PC-9 (cell line): ENCODE measurements at regions of chr1 and their contacts with region 1.

Region 1: GRCh38 chr1:227946624-227947385 is 927 bp downstream of the WNT9A start:
- DNase-seq: peak; percentile 70 to 97
- H3K4me3 ChIP-seq: peak overlapping the region; percentile 64
- H3K27ac ChIP-seq: peak overlapping the region; percentile 62
- H3K4me1 ChIP-seq: peaks cover 23% of the 10 kb centered on the region
- H3K27me3 ChIP-seq: no peaks in the 10 kb centered on the region
- CTCF ChIP-seq: peak; percentile 81

Region 2: GRCh38 chr1:226990133-226990716 is 956.6 kb before region 1 on chr1:
- CTCF ChIA-PET with region 1: no interaction called
- POLR2A ChIA-PET with region 1: no interaction called
- intact Hi-C with region 1: no loop called
- DNase-seq: no peak
- H3K4me3 ChIP-seq: no peak overlapping the region
- H3K27ac ChIP-seq: no peak overlapping the region
- H3K4me1 ChIP-seq: peaks cover 10% of the 10 kb centered on the region; the same call in 1 of the 2 replicates
- H3K27me3 ChIP-seq: no peaks in the 10 kb centered on the region
- CTCF ChIP-seq: no peak

Region 3: DNA sequence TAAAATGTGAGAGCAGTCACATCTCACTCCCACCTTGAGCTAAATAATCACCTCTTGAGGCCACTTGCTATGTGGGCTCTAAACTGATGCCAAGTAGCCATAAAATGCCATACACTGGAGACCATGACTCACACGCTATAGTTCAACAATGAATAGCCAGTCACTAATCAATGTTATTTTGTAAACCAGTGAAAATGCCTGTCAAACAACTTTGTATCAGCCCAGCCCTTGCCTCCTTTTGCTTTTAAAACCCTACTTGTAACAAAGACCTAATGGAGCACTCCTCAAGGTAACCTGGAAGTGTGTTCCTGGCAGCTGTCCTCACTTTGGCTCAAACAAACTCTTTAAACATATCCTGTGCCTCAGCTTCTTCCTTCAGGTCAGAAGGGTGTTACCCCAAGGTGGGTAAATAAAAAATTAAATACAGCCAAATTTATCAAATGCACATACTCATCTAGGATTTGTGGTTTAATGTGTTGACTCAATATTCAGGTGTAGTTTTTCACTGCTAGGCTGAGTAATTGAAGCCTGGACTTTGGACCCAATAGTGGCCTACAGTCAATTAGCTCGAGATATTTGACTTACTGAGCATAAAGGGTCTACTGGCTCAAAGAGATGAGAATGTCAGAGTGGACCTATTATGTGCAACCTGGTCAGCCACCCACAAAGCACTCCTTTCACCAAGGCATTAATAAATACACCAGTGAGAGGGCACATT is 852.4 kb before region 1 on chr1:
- CTCF ChIA-PET with region 1: no interaction called
- POLR2A ChIA-PET with region 1: no interaction called
- intact Hi-C with region 1: no loop called
- DNase-seq: no peak
- H3K4me3 ChIP-seq: no peak overlapping the region
- H3K27ac ChIP-seq: no peak overlapping the region
- H3K4me1 ChIP-seq: no peaks in the 10 kb centered on the region
- H3K27me3 ChIP-seq: no peaks in the 10 kb centered on the region
- CTCF ChIP-seq: no peak

Region 4: DNA sequence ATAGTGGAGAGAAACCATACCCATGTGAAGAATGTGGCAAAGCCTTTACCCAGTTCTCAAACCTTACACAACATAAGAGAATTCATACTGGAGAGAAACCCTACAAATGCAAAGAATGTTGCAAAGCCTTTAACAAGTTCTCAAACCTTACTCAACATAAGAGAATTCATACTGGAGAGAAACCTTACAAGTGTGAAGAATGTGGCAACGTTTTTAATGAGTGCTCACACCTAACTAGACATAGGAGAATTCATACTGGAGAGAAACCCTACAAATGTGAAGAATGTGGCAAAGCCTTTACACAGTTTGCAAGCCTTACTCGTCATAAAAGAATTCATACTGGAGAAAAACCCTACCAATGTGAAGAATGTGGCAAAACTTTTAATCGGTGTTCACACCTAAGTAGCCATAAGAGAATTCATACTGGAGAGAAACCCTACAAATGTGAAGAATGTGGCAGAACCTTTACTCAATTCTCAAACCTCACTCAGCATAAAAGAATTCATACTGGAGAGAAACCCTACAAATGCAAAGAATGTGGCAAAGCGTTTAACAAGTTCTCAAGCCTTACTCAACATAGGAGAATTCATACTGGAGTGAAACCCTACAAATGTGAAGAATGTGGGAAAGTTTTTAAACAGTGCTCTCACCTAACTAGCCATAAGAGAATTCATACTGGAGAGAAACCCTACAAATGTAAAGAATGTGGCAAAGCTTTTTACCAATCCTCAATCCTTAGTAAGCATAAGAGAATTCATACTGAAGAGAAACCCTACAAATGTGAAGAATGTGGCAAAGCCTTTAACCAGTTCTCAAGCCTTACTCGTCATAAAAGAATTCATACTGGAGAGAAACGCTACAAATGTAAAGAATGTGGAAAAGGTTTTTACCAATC is 291.7 kb before region 1 on chr1:
- CTCF ChIA-PET with region 1: no interaction called
- POLR2A ChIA-PET with region 1: no interaction called
- intact Hi-C with region 1: loop called (anchors 1 kb)
- DNase-seq: no peak
- H3K4me3 ChIP-seq: no peak overlapping the region
- H3K27ac ChIP-seq: no peak overlapping the region
- H3K4me1 ChIP-seq: no peaks in the 10 kb centered on the region
- H3K27me3 ChIP-seq: no peaks in the 10 kb centered on the region
- CTCF ChIP-seq: no peak

Region 5: DNA sequence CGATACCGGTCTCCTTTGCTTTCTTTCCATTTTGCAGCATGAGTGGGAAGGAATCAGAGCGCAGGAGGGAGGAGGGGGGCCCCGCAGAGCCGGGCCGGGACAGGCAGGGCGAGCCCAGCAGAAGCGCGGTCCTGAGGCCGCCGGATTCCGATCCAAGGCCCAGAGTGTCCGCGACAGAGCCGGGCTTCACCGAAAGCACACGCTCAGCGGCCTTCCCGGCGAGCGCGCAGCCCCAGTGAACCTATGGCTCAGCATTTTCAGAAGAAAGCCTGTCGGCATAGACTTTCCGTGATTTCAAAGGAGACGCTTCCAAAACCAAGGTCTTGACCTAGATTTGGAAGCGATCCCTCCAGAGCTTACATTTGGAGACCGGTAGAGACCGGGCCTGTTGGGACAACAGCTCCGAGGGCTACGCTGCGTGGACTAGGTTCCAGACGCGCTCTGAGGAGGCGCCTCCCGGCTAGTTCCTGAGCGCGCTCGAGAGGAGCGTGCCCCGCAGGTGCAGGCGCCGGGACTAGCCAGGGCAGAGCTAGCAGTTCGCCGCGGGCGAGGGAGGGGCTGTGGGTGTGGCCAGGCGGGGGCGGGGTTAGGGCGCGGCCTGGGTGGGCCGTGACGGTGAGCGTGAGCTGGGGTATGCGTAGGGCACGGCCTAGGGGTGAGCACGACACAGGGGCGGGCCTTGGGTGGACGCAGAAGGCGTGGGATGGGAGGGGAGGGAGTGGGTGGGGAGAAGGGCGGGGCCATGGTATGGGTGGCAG is 159.1 kb before region 1 on chr1:
- CTCF ChIA-PET with region 1: interaction called, 3 read pairs
- POLR2A ChIA-PET with region 1: interaction called, 8 read pairs
- intact Hi-C with region 1: loop called (anchors 1 kb)
- DNase-seq: peak; percentile 81 to 98
- H3K4me3 ChIP-seq: peak overlapping the region; percentile 57
- H3K27ac ChIP-seq: no peak overlapping the region
- H3K4me1 ChIP-seq: peaks cover 6% of the 10 kb centered on the region; the same call in 1 of the 2 replicates
- H3K27me3 ChIP-seq: no peaks in the 10 kb centered on the region
- CTCF ChIP-seq: no peak

Region 6: GRCh38 chr1:227895828-227896685 is 50.7 kb before region 1 on chr1:
- CTCF ChIA-PET with region 1: interaction called, 5 read pairs
- POLR2A ChIA-PET with region 1: interaction called, 4 read pairs
- intact Hi-C with region 1: loop called (anchors 1 kb)
- DNase-seq: peak in 1 of 2 experiments; percentile 91
- H3K4me3 ChIP-seq: no peak overlapping the region
- H3K27ac ChIP-seq: no peak overlapping the region
- H3K4me1 ChIP-seq: no peaks in the 10 kb centered on the region
- H3K27me3 ChIP-seq: no peaks in the 10 kb centered on the region
- CTCF ChIP-seq: no peak

Region 7: GRCh38 chr1:227909188-227909587 is 37.6 kb before region 1 on chr1:
- CTCF ChIA-PET with region 1: no interaction called
- POLR2A ChIA-PET with region 1: no interaction called
- intact Hi-C with region 1: no loop called
- DNase-seq: no peak
- H3K4me3 ChIP-seq: no peak overlapping the region
- H3K27ac ChIP-seq: no peak overlapping the region
- H3K4me1 ChIP-seq: no peaks in the 10 kb centered on the region
- H3K27me3 ChIP-seq: no peaks in the 10 kb centered on the region
- CTCF ChIP-seq: no peak

Region 8: GRCh38 chr1:227924833-227925574 is 21.8 kb before region 1 on chr1:
- CTCF ChIA-PET with region 1: interaction called, 17 read pairs
- POLR2A ChIA-PET with region 1: no interaction called
- intact Hi-C with region 1: no loop called
- DNase-seq: no peak
- H3K4me3 ChIP-seq: no peak overlapping the region
- H3K27ac ChIP-seq: no peak overlapping the region
- H3K4me1 ChIP-seq: no peaks in the 10 kb centered on the region
- H3K27me3 ChIP-seq: no peaks in the 10 kb centered on the region
- CTCF ChIP-seq: no peak